A549 (cell line): ENCODE measurements at regions of chrX and their contacts with region 1.

Region 1: GRCh38 chrX:154534862-154535670 is 11.6 kb downstream of the G6PD start:
- DNase-seq: peak; percentile 59 to 89
- ATAC-seq: peak; percentile 62 to 79
- H3K4me3 ChIP-seq: peak overlapping the region; percentile 18; the same call in 1 of the 3 replicates
- H3K27ac ChIP-seq: peak overlapping the region; percentile 98 to 100
- H3K4me1 ChIP-seq: peaks cover 100% of the 10 kb centered on the region
- CTCF ChIP-seq: peak; percentile 88
- EP300 ChIP-seq: no peak
- POLR2A ChIP-seq: no peak
- RAD21 ChIP-seq: peak; percentile 74 to 81

Region 2: GRCh38 chrX:154546354-154547244 is 11.5 kb after region 1 on chrX and contains the start of gene G6PD:
- CTCF ChIA-PET with region 1: interaction called, 55 read pairs
- POLR2A ChIA-PET with region 1: interaction called, 7 read pairs
- DNase-seq: peak; percentile 65 to 86
- ATAC-seq: peak; percentile 8 to 22
- H3K4me3 ChIP-seq: peak within 1 kb of the TSS; percentile 95
- H3K27ac ChIP-seq: peak within 1 kb of the TSS; percentile 98 to 100
- H3K4me1 ChIP-seq: peaks cover 43% of the 10 kb centered on the region
- CTCF ChIP-seq: no peak
- EP300 ChIP-seq: no peak
- POLR2A ChIP-seq: peak; percentile 92
- RAD21 ChIP-seq: no peak
- polyA plus RNA-seq, gene G6PD: 692 and 774 TPM in 2 replicates